Activated CD4-positive, alpha-beta T cell treated with anti-CD3 and anti-CD28 coated beads, Interleukin-2, amount 10 ng/mL, durations not matched to agents 7 days and 5 days (primary cell): ENCODE measurements at regions of chr7 and their contacts with region 1.

Region 1: GRCh38 chr7:151773756-151774155 is 103.2 kb downstream of the PRKAG2 start:
- DNase-seq: no peak
- H3K4me3 Mint-ChIP-seq: no peak overlapping the region
- H3K27ac Mint-ChIP-seq: no peak overlapping the region
- H3K4me1 Mint-ChIP-seq: peaks cover 31% of the 10 kb centered on the region
- H3K27me3 Mint-ChIP-seq: no peaks in the 10 kb centered on the region

Region 2: GRCh38 chr7:151744656-151745638 is 28.8 kb before region 1 on chr7:
- CTCF ChIA-PET with region 1: no interaction called
- POLR2A ChIA-PET with region 1: no interaction called
- DNase-seq: no peak
- H3K4me3 Mint-ChIP-seq: no peak overlapping the region
- H3K27ac Mint-ChIP-seq: no peak overlapping the region
- H3K4me1 Mint-ChIP-seq: peaks cover 15% of the 10 kb centered on the region
- H3K27me3 Mint-ChIP-seq: no peaks in the 10 kb centered on the region

Region 3: GRCh38 chr7:151759591-151760042 is 14.1 kb before region 1 on chr7:
- CTCF ChIA-PET with region 1: interaction called, 11 read pairs
- POLR2A ChIA-PET with region 1: no interaction called
- DNase-seq: peak; percentile 70
- H3K4me3 Mint-ChIP-seq: no peak overlapping the region
- H3K27ac Mint-ChIP-seq: no peak overlapping the region
- H3K4me1 Mint-ChIP-seq: peaks cover 24% of the 10 kb centered on the region
- H3K27me3 Mint-ChIP-seq: no peaks in the 10 kb centered on the region

Region 4: DNA sequence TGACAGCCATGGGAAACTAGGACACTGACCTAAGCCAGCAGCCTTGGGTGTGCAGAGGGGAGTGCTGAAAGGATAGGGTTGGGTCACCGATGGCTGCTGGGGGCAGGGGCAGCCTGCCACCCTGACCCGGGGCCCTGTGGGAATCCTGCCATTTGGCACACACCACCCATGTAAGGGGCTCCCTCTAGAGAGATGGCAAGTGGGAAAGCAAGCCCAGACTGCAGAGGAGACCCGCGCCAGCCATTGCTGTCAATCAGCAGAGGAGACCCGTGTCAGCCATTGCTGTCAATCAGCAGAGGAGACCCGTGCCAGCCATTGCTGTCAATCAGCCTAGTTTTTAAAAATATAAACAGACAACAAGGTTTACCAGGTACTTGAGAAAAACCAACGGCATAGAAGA is 130.5 kb after region 1 on chr7:
- CTCF ChIA-PET with region 1: no interaction called
- POLR2A ChIA-PET with region 1: no interaction called
- DNase-seq: no peak
- H3K4me3 Mint-ChIP-seq: no peak overlapping the region
- H3K27ac Mint-ChIP-seq: no peak overlapping the region
- H3K4me1 Mint-ChIP-seq: no peaks in the 10 kb centered on the region
- H3K27me3 Mint-ChIP-seq: peaks cover 20% of the 10 kb centered on the region

Region 5: DNA sequence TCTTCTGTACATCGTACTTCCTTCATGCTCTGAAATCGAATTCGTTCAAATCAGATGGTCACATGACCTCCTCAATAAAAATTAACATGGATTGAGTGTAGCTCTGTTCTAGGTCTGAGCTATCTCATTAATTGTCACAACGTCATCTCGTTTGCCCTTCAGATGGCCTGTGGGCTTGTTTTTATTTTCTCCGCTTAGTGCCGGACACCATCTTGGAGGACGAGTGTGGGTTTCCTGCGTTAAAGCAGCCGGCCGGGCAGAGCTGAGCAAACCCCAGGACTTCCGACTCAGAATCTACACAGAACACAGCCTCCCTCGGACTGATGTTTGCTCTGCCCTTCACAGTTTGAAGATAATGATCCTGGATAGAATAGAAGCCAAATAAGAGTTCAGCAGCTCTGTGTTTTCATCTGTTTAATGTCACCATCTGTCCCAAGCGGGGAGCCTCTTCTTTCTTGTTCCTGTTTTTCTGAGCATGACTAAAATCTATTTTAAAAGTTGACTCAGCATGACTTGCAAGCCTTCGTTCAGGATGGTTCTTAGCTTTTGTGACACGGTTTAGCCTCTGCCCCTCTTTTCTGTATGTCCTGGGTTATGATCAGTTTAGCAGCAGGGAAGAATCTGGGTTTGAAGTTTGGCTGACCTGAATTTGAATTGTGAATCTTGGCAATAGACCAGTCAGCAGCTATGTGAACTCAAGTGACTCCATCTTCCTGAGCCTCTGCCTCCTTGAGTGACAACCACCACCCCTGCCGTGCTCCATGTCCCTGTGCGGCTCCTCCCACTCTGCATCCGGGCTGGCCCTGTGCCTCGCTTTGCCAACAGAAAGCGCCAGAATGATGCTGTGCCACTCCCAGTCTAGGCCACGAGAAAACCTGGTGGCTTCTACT is 151.9 kb after region 1 on chr7:
- CTCF ChIA-PET with region 1: no interaction called
- POLR2A ChIA-PET with region 1: no interaction called
- DNase-seq: no peak
- H3K4me3 Mint-ChIP-seq: no peak overlapping the region
- H3K27ac Mint-ChIP-seq: no peak overlapping the region
- H3K4me1 Mint-ChIP-seq: peaks cover 9% of the 10 kb centered on the region
- H3K27me3 Mint-ChIP-seq: no peaks in the 10 kb centered on the region

Region 6: DNA sequence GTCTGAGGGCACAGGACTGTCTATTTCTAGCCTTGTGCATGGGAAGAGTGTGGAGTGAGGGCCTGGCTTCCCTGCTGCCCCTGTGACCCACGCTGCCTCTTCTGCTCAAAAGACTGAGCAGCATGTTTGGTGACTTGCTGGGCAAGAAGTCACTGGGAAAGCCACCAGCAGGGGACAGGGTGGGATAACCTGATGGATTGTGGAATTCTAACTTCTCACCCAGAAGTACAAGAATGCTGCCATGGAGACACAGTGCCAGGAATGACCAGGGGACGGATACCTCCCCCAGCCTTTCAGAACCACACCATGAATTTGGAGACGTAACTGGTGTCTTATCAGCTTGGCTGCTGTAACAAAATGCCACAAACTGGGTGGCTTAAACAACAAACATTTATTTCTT is 210.8 kb after region 1 on chr7:
- CTCF ChIA-PET with region 1: no interaction called
- POLR2A ChIA-PET with region 1: no interaction called
- DNase-seq: no peak
- H3K4me3 Mint-ChIP-seq: no peak overlapping the region
- H3K27ac Mint-ChIP-seq: no peak overlapping the region
- H3K4me1 Mint-ChIP-seq: no peaks in the 10 kb centered on the region
- H3K27me3 Mint-ChIP-seq: no peaks in the 10 kb centered on the region